PC-3 (cell line): ENCODE measurements at regions of chr16 and their contacts with region 1.

Region 1: DNA sequence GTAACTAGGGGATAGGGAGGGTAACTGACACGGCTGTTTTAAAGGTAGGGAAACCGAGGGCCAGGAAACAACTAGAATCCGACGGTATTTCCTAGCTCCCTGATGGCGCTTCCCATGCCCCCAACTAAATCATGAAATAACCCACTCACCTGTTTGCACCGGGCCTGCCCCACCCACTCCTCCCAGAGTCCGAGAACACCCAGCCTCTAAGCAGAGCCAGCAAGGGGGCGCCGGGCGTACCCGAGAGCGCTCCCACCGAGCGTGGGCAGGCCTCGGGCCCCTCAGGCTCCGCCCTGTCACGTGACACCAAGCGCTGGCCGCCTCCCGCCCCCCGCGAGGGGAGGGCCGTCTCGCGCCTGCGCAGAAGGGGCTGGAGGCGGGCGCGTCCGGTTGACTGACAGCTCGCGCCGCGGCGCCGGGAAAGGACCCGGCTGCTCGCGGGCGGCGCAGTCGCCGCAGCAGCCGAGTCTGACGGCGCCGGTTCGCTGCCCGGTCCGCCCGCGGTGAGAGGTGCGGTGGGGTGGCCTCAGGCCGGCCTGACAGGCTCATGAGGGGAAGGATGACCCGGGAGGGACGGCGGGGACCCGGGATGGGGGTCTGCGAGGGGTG is at the start of gene KIAA0513:
- DNase-seq: peak; percentile 90
- ATAC-seq: peak; percentile 53
- H3K4me3 ChIP-seq: peak within 1 kb of the TSS; percentile 79
- H3K27ac ChIP-seq: peak within 1 kb of the TSS; percentile 84
- H3K4me1 ChIP-seq: peaks cover 46% of the 10 kb centered on the region
- H3K27me3 ChIP-seq: no peaks in the 10 kb centered on the region
- CTCF ChIP-seq: no peak
- total RNA-seq, gene KIAA0513: 5.5 and 7.8 TPM in 2 replicates

Region 2: GRCh38 chr16:84970447-84971127 is 56.9 kb before region 1 on chr16:
- CTCF ChIA-PET with region 1: no interaction called
- POLR2A ChIA-PET with region 1: no interaction called
- intact Hi-C with region 1: no loop called
- DNase-seq: peak; percentile 73
- ATAC-seq: peak; percentile 93
- H3K4me3 ChIP-seq: no peak overlapping the region
- H3K27ac ChIP-seq: no peak overlapping the region
- H3K4me1 ChIP-seq: peaks cover 10% of the 10 kb centered on the region
- H3K27me3 ChIP-seq: no peaks in the 10 kb centered on the region
- CTCF ChIP-seq: peak; percentile 85

Region 3: GRCh38 chr16:85004559-85005205 is 22.8 kb before region 1 on chr16:
- CTCF ChIA-PET with region 1: interaction called, 10 read pairs
- POLR2A ChIA-PET with region 1: no interaction called
- intact Hi-C with region 1: no loop called
- DNase-seq: peak; percentile 71
- ATAC-seq: peak; percentile 77
- H3K4me3 ChIP-seq: peak overlapping the region; percentile 26; the same call in 1 of the 2 replicates
- H3K27ac ChIP-seq: peak overlapping the region; percentile 51
- H3K4me1 ChIP-seq: peaks cover 50% of the 10 kb centered on the region
- H3K27me3 ChIP-seq: no peaks in the 10 kb centered on the region
- CTCF ChIP-seq: no peak

Region 4: DNA sequence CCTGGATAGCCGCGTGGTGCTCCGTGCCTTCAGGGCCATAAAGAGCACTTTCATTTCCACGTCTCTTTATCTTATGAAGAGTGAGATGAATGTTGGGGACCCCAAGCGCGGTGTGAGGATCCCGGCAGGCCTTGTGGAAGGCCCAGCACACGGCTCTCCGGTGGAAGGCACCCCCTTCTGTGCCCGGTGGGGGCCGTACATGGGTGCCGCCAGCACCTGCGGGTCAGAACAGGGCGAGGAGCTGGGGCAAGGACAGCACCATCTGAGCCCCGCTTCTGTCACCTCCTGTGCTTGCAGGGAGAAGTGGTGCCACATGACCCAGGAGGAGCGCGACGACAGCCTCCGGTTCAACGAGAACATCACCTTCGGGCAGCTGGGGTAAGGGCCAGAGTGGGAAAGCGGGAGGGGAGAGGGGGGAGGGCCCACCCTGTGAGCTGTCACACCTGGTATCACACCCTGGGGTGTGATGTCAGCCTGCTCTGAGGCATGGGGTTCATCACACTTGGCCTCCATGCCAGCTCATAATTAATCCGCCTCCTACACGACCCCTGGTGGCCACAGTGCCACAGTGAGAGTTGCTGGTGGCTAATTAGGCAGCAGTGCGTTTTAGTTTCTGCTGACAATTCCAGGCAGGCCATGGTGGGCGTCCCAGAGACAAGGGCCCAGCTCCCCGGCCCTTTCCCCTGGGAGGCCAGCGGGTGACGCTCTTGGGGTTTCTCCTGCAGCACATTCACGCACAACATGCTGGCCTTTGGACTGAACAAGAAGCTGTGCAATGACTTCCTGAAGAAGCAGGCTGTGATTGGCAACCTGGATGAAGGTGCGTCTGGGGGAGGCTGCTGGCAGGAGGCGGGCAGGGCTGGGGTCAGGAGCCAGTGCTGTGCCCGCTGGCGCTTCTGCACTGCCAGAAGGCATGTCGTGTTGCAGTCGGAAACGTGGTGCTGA is 59.2 kb after region 1 on chr16:
- CTCF ChIA-PET with region 1: no interaction called
- POLR2A ChIA-PET with region 1: no interaction called
- intact Hi-C with region 1: loop called (anchors 1 kb)
- DNase-seq: peak; percentile 64
- ATAC-seq: peak; percentile 81
- H3K4me3 ChIP-seq: no peak overlapping the region
- H3K27ac ChIP-seq: no peak overlapping the region
- H3K4me1 ChIP-seq: no peaks in the 10 kb centered on the region
- H3K27me3 ChIP-seq: no peaks in the 10 kb centered on the region
- CTCF ChIP-seq: peak; percentile 63

Region 5: DNA sequence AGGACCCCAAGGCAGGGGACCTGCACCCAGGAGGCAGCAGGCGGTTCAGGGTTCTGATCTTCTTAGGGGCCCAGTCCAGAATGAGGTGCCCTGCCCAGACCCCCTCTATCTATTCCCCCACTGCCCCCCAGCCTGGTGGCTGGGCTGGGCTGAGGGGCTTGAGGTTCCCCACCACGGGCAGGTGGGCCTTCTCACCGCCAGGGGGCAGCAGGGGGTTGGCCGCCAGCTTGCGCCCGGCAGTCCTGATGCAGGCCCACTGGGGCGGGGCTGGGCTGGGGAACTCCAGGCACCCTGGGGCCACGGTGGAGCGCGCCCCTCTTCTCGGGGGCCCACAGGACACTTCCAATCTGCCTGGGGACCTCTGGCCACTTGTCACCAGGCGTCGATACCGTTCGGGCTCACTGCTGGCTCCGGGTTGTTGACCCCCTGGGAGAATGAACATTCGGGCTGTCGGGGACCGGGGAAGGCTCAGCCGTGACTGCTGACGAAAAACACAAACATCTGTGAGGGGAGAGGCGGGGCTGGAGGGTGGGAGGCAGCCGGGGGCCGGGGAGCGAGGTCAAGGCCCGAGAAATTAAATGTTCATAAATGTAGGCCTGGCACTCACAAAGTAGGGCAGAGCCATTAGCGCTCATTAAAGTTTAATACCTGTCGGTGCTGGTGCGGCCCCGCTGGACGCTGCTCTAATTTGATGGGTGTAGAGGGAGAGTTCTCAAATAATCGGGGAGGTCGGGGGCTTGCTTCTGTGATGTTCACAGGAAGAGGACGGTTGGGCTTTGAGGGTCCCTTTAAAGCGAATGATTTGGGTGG is 366.4 kb after region 1 on chr16:
- CTCF ChIA-PET with region 1: no interaction called
- POLR2A ChIA-PET with region 1: no interaction called
- intact Hi-C with region 1: no loop called
- DNase-seq: peak; percentile 23
- ATAC-seq: no peak
- H3K4me3 ChIP-seq: no peak overlapping the region
- H3K27ac ChIP-seq: no peak overlapping the region
- H3K4me1 ChIP-seq: peaks cover 17% of the 10 kb centered on the region
- H3K27me3 ChIP-seq: no peaks in the 10 kb centered on the region
- CTCF ChIP-seq: peak; percentile 66